CD4-positive, alpha-beta T cell (primary cell): ENCODE measurements at regions of chr4 and their contacts with region 1.

Region 1: DNA sequence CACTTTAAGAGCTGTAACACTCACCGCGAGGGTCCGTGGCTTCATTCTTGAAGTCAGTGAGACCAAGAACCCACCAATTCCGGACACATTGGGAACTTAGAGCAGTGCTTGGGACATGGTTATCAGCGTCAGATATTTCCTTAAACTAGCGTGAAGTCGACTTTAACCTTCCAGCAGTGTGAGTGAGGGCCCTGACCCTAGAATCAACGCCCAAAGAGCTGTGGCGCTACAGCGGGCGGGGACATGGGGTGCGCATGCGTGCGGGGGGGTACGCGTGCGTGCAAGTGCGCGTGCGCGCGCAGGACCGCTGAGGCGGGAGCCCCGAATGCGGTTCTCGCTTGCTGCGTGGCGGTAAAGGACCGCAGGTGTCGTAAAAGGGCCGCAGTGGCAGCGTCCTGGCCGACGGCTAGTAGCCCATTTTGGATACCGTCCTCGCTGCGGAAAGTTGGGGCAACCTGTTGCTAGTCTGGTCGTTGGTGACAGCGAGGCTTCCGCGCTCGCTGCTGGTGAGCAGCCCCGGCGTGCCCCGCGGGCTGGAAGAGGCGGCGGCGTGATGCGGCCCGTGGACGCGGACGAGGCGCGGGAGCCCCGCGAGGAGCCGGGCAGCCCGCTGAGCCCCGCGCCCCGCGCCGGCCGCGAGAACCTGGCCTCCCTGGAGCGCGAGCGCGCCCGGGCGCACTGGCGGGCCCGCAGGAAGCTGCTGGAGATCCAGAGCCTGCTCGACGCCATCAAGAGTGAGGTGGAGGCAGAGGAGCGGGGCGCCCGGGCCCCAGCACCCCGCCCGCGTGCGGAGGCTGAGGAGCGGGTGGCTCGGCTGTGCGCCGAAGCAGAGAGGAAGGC is 19.8 kb upstream of the S100P start:
- DNase-seq: peak; percentile 87 to 99 (median 94)
- ATAC-seq: peak; percentile 82
- H3K4me3 ChIP-seq: peak overlapping the region; percentile 64
- H3K4me3 Mint-ChIP-seq: peak overlapping the region; percentile 97
- H3K27ac ChIP-seq: peak overlapping the region; percentile 72 to 76
- H3K27ac Mint-ChIP-seq: peak overlapping the region; percentile 96
- H3K4me1 ChIP-seq: peaks cover 53% of the 10 kb centered on the region
- H3K4me1 Mint-ChIP-seq: peaks cover 50% of the 10 kb centered on the region
- H3K27me3 ChIP-seq: no peaks in the 10 kb centered on the region
- H3K27me3 Mint-ChIP-seq: no peaks in the 10 kb centered on the region
- CTCF ChIP-seq: no peak

Region 2: GRCh38 chr4:6574747-6575502 is 99.0 kb before region 1 on chr4 and contains the start of gene MAN2B2:
- CTCF ChIA-PET with region 1: no interaction called
- POLR2A ChIA-PET with region 1: interaction called, 10 read pairs
- intact Hi-C with region 1: no loop called
- DNase-seq: peak; percentile 51 to 89 (median 80)
- ATAC-seq: peak; percentile 93
- H3K4me3 ChIP-seq: peak within 1 kb of the TSS; percentile 98
- H3K4me3 Mint-ChIP-seq: peak within 1 kb of the TSS; percentile 93
- H3K27ac ChIP-seq: peak within 1 kb of the TSS; percentile 55 to 74
- H3K27ac Mint-ChIP-seq: peak within 1 kb of the TSS; percentile 79
- H3K4me1 ChIP-seq: peaks cover 30% of the 10 kb centered on the region
- H3K4me1 Mint-ChIP-seq: peaks cover 4% of the 10 kb centered on the region
- H3K27me3 ChIP-seq: no peaks in the 10 kb centered on the region
- H3K27me3 Mint-ChIP-seq: no peaks in the 10 kb centered on the region
- CTCF ChIP-seq: no peak
- total RNA-seq, gene MAN2B2: 25.9 to 28.5 TPM

Region 3: GRCh38 chr4:6688879-6689505 is 15.1 kb after region 1 on chr4:
- CTCF ChIA-PET with region 1: interaction called, 39 read pairs
- POLR2A ChIA-PET with region 1: interaction called, 167 read pairs
- intact Hi-C with region 1: loop called (anchors 1 to 2 kb)
- DNase-seq: peak; percentile 48 to 85 (median 69)
- ATAC-seq: peak; percentile 75
- H3K4me3 ChIP-seq: peak overlapping the region; percentile 58
- H3K4me3 Mint-ChIP-seq: peak overlapping the region; percentile 89
- H3K27ac ChIP-seq: peak overlapping the region; percentile 34 to 82
- H3K27ac Mint-ChIP-seq: peak overlapping the region; percentile 91
- H3K4me1 ChIP-seq: peaks cover 90% of the 10 kb centered on the region
- H3K4me1 Mint-ChIP-seq: peaks cover 71% of the 10 kb centered on the region
- H3K27me3 ChIP-seq: no peaks in the 10 kb centered on the region
- H3K27me3 Mint-ChIP-seq: no peaks in the 10 kb centered on the region
- CTCF ChIP-seq: no peak

Region 4: GRCh38 chr4:6709230-6710114 is 35.6 kb after region 1 on chr4 and contains the start of gene MRFAP1L1:
- CTCF ChIA-PET with region 1: interaction called, 74 read pairs
- POLR2A ChIA-PET with region 1: interaction called, 245 read pairs
- intact Hi-C with region 1: loop called (anchors 1 kb)
- DNase-seq: peak; percentile 94 to 98 (median 96)
- ATAC-seq: peak; percentile 87
- H3K4me3 ChIP-seq: peak within 1 kb of the TSS; percentile 74
- H3K4me3 Mint-ChIP-seq: peak within 1 kb of the TSS; percentile 99
- H3K27ac ChIP-seq: peak within 1 kb of the TSS; percentile 79 to 85
- H3K27ac Mint-ChIP-seq: peak within 1 kb of the TSS; percentile 97
- H3K4me1 ChIP-seq: peaks cover 40% of the 10 kb centered on the region
- H3K4me1 Mint-ChIP-seq: peaks cover 69% of the 10 kb centered on the region
- H3K27me3 ChIP-seq: no peaks in the 10 kb centered on the region
- H3K27me3 Mint-ChIP-seq: no peaks in the 10 kb centered on the region
- CTCF ChIP-seq: no peak
- total RNA-seq, gene MRFAP1L1: 26.6 to 27.0 TPM

Region 5: GRCh38 chr4:6815029-6815836 is 141.4 kb after region 1 on chr4:
- CTCF ChIA-PET with region 1: no interaction called
- POLR2A ChIA-PET with region 1: no interaction called
- intact Hi-C with region 1: no loop called
- DNase-seq: no peak
- ATAC-seq: no peak
- H3K4me3 ChIP-seq: no peak overlapping the region
- H3K4me3 Mint-ChIP-seq: no peak overlapping the region
- H3K27ac ChIP-seq: no peak overlapping the region
- H3K27ac Mint-ChIP-seq: no peak overlapping the region
- H3K4me1 ChIP-seq: no peaks in the 10 kb centered on the region
- H3K4me1 Mint-ChIP-seq: peaks cover 30% of the 10 kb centered on the region
- H3K27me3 ChIP-seq: no peaks in the 10 kb centered on the region
- H3K27me3 Mint-ChIP-seq: no peaks in the 10 kb centered on the region
- CTCF ChIP-seq: no peak

Region 6: GRCh38 chr4:6873792-6874461 is 200.0 kb after region 1 on chr4:
- CTCF ChIA-PET with region 1: interaction called, 21 read pairs
- POLR2A ChIA-PET with region 1: interaction called, 20 read pairs
- intact Hi-C with region 1: loop called (anchors 1 kb)
- DNase-seq: peak; percentile 74 to 89 (median 78)
- ATAC-seq: peak; percentile 97
- H3K4me3 ChIP-seq: no peak overlapping the region
- H3K4me3 Mint-ChIP-seq: no peak overlapping the region
- H3K27ac ChIP-seq: no peak overlapping the region
- H3K27ac Mint-ChIP-seq: no peak overlapping the region
- H3K4me1 ChIP-seq: peaks cover 6% of the 10 kb centered on the region
- H3K4me1 Mint-ChIP-seq: no peaks in the 10 kb centered on the region
- H3K27me3 ChIP-seq: no peaks in the 10 kb centered on the region
- H3K27me3 Mint-ChIP-seq: no peaks in the 10 kb centered on the region
- CTCF ChIP-seq: peak; percentile 80

Region 7: DNA sequence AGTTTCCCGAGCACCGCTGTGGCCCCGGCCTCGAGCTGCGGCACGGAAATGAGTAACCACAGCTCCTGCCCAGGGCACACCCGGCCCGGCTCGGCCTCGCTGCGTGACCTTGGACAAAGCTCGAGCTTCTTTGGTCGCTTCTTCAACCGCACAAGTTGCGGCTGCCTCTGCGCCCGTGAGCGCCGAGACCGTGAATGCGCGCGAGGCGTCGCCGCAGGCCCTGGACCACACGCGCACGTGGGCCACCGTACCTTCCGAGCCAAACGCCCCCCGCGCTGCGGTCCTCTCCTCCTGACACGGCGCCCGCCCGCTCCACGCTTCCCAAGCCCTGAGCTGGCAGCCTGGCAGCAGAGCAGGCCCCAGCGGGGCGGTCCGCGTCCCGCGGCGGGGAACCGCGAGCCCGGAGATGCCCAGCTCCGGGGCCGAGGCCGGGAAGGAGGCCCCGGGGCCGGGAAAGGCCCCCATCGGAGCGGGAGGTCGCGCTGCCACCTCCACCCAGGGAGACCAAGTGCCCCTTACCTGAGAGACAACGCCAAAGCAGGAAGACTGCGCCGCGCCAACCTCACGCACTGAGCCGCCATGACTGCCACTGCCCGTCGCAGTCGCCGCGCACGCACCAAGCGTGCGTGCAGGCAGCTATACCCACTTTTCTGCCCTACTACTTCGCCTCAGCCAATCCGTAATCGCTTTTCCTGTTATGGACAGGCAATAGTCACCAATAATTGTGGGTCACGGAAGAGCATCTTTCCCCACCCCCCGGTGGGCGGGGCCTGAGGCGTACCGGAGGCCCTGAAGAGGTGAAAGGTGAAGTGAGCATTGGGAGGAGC is 393.8 kb after region 1 on chr4 and contains the start of gene GRPEL1:
- CTCF ChIA-PET with region 1: interaction called, 3 read pairs
- POLR2A ChIA-PET with region 1: interaction called, 26 read pairs
- intact Hi-C with region 1: no loop called
- DNase-seq: peak; percentile 100
- ATAC-seq: peak; percentile 88
- H3K4me3 ChIP-seq: peak within 1 kb of the TSS; percentile 76
- H3K4me3 Mint-ChIP-seq: peak within 1 kb of the TSS; percentile 97
- H3K27ac ChIP-seq: peak within 1 kb of the TSS; percentile 71 to 78
- H3K27ac Mint-ChIP-seq: peak within 1 kb of the TSS; percentile 93
- H3K4me1 ChIP-seq: peaks cover 45% of the 10 kb centered on the region
- H3K4me1 Mint-ChIP-seq: peaks cover 60% of the 10 kb centered on the region
- H3K27me3 ChIP-seq: no peaks in the 10 kb centered on the region
- H3K27me3 Mint-ChIP-seq: no peaks in the 10 kb centered on the region
- CTCF ChIP-seq: no peak
- total RNA-seq, gene GRPEL1: 55.6 to 58.6 TPM